Activated CD4-positive, alpha-beta T cell treated with anti-CD3 and anti-CD28 coated beads, Interleukin-2, amount 10 ng/mL, durations not matched to agents 24 days and 14 days (primary cell): ENCODE measurements at regions of chr1 and their contacts with region 1.

Region 1: GRCh38 chr1:200154069-200154767 is 126.7 kb downstream of the NR5A2 start:
- DNase-seq: peak; percentile 89
- H3K4me3 Mint-ChIP-seq: peak overlapping the region; percentile 60
- H3K27ac Mint-ChIP-seq: peak overlapping the region; percentile 88
- H3K4me1 Mint-ChIP-seq: peaks cover 47% of the 10 kb centered on the region
- H3K27me3 Mint-ChIP-seq: no peaks in the 10 kb centered on the region

Region 2: GRCh38 chr1:199173356-199173755 is 980.9 kb before region 1 on chr1:
- intact Hi-C with region 1: loop called (anchors 5 kb)
- DNase-seq: peak; percentile 79
- H3K4me3 Mint-ChIP-seq: peak overlapping the region; percentile 16
- H3K27ac Mint-ChIP-seq: peak overlapping the region; percentile 60
- H3K4me1 Mint-ChIP-seq: peaks cover 44% of the 10 kb centered on the region
- H3K27me3 Mint-ChIP-seq: peaks cover 7% of the 10 kb centered on the region

Region 3: DNA sequence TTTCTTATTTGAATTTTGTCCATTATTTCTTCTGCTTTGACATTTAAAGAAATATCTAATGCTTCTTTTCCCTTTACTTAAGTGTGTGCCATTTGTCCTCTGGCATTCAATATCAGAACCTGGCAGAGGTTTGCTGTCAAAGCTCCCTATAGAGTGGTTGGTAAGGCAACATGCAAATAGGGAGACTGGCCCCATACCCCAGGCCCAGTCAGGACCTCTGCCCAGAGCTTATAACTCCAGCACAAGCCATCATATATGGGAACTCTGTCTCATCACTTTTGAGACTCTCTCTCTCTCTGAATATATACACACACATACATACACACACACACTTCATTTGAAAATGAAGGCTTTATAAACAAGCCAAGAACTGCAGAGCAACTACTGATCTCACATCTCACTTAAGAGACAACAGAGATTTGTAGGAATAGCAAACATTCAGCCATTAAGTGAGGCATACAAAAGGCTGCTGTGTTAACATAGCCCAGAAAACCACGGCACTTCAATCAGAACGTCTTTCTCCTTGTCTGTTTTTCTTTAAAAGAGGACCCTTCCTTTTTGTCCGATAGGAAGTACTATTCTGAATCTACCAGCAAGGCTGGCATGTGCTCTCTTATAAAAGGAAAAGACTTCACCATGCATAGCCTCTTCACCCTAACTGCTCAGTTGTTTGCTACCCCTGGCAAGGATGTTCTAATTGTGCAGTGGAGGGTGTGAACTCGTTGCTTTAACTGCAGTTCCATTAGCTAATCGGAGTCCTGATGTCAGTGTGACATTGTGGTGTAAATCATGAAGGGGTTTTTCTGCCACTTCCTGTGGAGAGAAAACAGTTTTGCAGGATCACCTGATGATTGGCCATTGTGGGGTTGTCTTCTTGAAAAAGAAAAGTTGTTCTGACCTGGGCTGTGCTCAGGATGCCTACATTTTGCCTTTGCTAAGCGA is 25.0 kb before region 1 on chr1:
- intact Hi-C with region 1: no loop called
- DNase-seq: peak; percentile 79
- H3K4me3 Mint-ChIP-seq: peak overlapping the region; percentile 9
- H3K27ac Mint-ChIP-seq: peak overlapping the region; percentile 77
- H3K4me1 Mint-ChIP-seq: peaks cover 16% of the 10 kb centered on the region
- H3K27me3 Mint-ChIP-seq: peaks cover 13% of the 10 kb centered on the region

Region 4: DNA sequence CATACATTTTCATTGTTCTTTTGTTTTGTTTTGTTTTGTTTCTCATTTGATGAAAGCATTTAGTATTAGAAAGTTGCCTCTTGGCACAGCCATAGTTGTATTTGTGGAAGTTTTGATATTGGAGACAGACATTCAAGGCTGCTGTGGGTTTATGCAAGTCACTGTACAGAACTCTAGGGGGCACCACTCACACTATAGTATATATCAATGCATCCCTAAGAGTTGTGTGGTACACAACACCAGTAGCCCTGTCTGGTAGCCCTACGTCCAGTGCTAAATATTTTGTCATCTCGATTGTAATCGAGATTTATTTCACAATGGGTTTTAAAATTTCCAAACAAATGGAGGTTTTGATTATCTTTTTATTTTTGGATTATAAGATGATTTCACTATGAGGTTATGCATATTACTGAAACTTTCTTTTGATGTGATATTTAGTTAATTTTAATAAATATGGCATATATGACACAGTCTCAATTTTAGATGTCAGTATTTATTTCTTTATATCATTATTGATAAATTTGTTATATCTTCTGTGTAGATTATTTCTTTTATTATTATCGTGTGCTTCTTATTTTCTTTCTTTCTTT is 14.5 kb before region 1 on chr1:
- intact Hi-C with region 1: loop called (anchors 2 kb)
- DNase-seq: peak; percentile 79
- H3K4me3 Mint-ChIP-seq: no peak overlapping the region
- H3K27ac Mint-ChIP-seq: no peak overlapping the region
- H3K4me1 Mint-ChIP-seq: peaks cover 5% of the 10 kb centered on the region
- H3K27me3 Mint-ChIP-seq: peaks cover 9% of the 10 kb centered on the region

Region 5: DNA sequence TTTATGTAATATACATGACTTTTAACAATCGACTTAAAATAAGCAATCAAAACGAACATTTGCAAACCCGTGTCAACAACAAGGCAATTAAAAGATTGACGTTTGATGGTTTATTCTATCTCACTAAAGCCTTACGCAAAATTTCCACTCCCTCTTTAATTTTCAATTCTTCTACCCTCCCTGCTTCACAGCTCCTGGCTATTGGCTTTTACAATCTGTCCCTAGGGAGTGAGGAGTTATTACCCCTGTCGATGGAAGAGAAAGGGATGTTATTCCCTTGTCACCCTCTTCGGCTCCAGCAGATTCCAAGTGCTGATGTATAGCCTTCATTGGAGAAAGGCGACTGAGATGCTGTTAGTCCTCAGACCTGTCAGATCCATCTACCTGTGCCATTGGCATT is 94.3 kb after region 1 on chr1:
- intact Hi-C with region 1: no loop called
- DNase-seq: peak; percentile 40
- H3K4me3 Mint-ChIP-seq: no peak overlapping the region
- H3K27ac Mint-ChIP-seq: no peak overlapping the region
- H3K4me1 Mint-ChIP-seq: peaks cover under 1% of the 10 kb centered on the region
- H3K27me3 Mint-ChIP-seq: peaks cover 48% of the 10 kb centered on the region

Region 6: GRCh38 chr1:200258447-200259375 is 104.5 kb after region 1 on chr1:
- intact Hi-C with region 1: loop called (anchors 1 kb)
- DNase-seq: no peak
- H3K4me3 Mint-ChIP-seq: no peak overlapping the region
- H3K27ac Mint-ChIP-seq: no peak overlapping the region
- H3K4me1 Mint-ChIP-seq: peaks cover 11% of the 10 kb centered on the region
- H3K27me3 Mint-ChIP-seq: peaks cover 13% of the 10 kb centered on the region

Region 7: GRCh38 chr1:200351826-200352549 is 197.8 kb after region 1 on chr1:
- intact Hi-C with region 1: loop called (anchors 1 kb)
- DNase-seq: peak; percentile 77
- H3K4me3 Mint-ChIP-seq: peak overlapping the region; percentile 53
- H3K27ac Mint-ChIP-seq: peak overlapping the region; percentile 67
- H3K4me1 Mint-ChIP-seq: peaks cover 38% of the 10 kb centered on the region
- H3K27me3 Mint-ChIP-seq: no peaks in the 10 kb centered on the region

Region 8: DNA sequence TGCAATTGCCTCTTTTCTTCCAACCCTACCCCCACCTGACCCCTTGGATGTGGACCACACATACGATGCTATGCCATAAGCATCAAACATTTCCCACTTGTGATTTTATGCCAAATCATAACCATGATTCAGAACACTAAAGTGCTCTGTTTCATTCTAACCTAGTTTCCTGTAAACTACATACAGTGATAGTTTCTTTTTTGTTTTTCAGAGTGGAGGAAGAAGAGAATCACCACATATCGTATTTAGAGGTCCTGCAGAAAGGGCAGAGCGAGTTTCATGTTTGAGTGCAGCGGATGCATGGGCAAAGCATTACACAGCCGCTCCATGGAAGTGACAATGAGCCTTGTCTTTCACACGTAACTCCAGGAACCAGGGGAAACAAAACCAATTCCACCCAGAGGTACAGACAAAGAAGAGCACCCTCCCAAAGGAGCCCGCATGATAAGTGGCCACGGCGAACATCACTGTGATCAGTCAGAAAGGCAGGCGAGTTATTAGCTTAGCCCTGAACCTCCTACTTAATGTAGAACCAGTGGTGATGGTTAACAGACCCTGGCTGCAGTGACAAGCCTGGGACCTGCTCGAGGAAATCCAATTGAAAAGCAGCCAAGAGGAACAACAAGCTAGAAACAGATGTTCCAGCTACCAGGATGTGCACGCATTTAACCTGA is 319.6 kb after region 1 on chr1:
- intact Hi-C with region 1: loop called (anchors 1 kb)
- DNase-seq: peak; percentile 69
- H3K4me3 Mint-ChIP-seq: peak overlapping the region; percentile 17
- H3K27ac Mint-ChIP-seq: peak overlapping the region; percentile 71
- H3K4me1 Mint-ChIP-seq: peaks cover 30% of the 10 kb centered on the region
- H3K27me3 Mint-ChIP-seq: peaks cover 10% of the 10 kb centered on the region

Region 9: GRCh38 chr1:200628223-200628881 is 474.1 kb after region 1 on chr1:
- intact Hi-C with region 1: loop called (anchors 5 kb)
- DNase-seq: peak; percentile 69
- H3K4me3 Mint-ChIP-seq: peak overlapping the region; percentile 58
- H3K27ac Mint-ChIP-seq: peak overlapping the region; percentile 62
- H3K4me1 Mint-ChIP-seq: peaks cover 34% of the 10 kb centered on the region
- H3K27me3 Mint-ChIP-seq: peaks cover 8% of the 10 kb centered on the region